Heart right ventricle (tissue), 16 donors: ENCODE measurements at regions of chr14 and their contacts with region 1.

Region 1: GRCh38 chr14:22766456-22767322 is at the start of gene OXA1L:
- DNase-seq: peak; percentile 94 to 99
- ATAC-seq: peak; percentile 92 to 97 (median 96)
- H3K4me3 ChIP-seq: peak within 1 kb of the TSS; percentile 65 to 97 (median 86)
- H3K27ac ChIP-seq: peak within 1 kb of the TSS; percentile 85 to 95 (median 90)
- H3K4me1 ChIP-seq: peaks cover 0 to 42% (median 24%) of the 10 kb centered on the region in 9 donors
- H3K27me3 ChIP-seq: no peaks in the 10 kb centered on the region
- CTCF ChIP-seq: no peak
- total RNA-seq, gene OXA1L: 138 to 219 (median 189) TPM

Region 2: DNA sequence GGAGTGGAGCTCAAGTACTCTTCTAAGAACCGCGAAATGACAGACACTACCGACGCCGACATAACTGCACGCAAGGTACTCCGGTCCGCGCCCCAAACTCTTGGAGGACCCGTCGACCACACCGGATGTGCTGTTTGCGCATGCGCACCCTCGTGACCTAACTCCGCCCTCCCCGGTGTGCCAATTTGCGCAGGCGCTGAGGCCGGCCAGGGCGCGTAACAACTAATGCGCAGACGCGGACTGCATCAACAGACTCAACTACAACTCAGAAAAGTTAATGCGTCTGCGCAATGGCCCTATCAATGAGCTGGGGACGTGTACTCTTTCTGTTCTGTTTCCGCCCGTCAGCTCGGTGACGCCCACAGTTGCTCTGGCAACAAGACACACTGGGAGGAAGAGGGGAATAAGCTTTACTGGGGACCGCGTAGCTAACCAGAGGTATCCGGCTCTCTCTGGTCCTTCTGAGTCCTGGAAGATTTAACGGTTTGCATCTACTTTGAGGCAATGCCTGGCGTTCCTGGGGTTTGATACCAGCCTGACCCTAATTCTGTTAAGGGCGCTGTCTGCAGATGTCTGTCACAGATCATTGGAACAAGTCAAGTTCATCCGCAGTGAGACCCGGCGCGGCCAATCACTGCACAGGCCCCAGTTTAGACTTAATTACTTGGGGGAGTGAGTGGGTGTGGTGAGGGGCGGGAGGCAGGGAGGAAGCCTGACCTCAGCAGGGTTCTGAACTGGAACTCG is 177.4 kb before region 1 on chr14 and contains the start of gene DAD1:
- intact Hi-C with region 1: loop called in 1 of 10 experiments (anchors 5 kb)
- DNase-seq: peak; percentile 99
- ATAC-seq: peak; percentile 98 to 99 (median 99)
- H3K4me3 ChIP-seq: peak within 1 kb of the TSS; percentile 48 to 94 (median 73)
- H3K27ac ChIP-seq: peak within 1 kb of the TSS; percentile 76 to 96 (median 90)
- H3K4me1 ChIP-seq: peaks cover 3 to 55% (median 47%) of the 10 kb centered on the region in 9 donors
- H3K27me3 ChIP-seq: no peaks in the 10 kb centered on the region
- CTCF ChIP-seq: no peak
- total RNA-seq, gene DAD1: 115 to 182 (median 136) TPM